Caco-2 (cell line): ENCODE measurements at regions of chr22 and their contacts with region 1.

Region 1: GRCh38 chr22:47452184-47452583 is 689.7 kb downstream of the TBC1D22A start:
- DNase-seq: peak in 1 of 2 experiments; percentile 34
- H3K4me3 ChIP-seq: no peak overlapping the region
- H3K4me3 Mint-ChIP-seq: no peak overlapping the region
- H3K27ac Mint-ChIP-seq: no peak overlapping the region
- H3K4me1 ChIP-seq: no peaks in the 10 kb centered on the region
- H3K4me1 Mint-ChIP-seq: no peaks in the 10 kb centered on the region
- H3K27me3 ChIP-seq: no peaks in the 10 kb centered on the region
- H3K27me3 Mint-ChIP-seq: peaks cover 17% of the 10 kb centered on the region
- CTCF ChIP-seq: peak; percentile 38 to 50

Region 2: GRCh38 chr22:47837703-47838102 is 385.5 kb after region 1 on chr22:
- CTCF ChIA-PET with region 1: no interaction called
- POLR2A ChIA-PET with region 1: no interaction called
- intact Hi-C with region 1: loop called (anchors 5 kb)
- DNase-seq: peak in 1 of 2 experiments; percentile 38
- H3K4me3 ChIP-seq: no peak overlapping the region
- H3K4me3 Mint-ChIP-seq: no peak overlapping the region
- H3K27ac Mint-ChIP-seq: no peak overlapping the region
- H3K4me1 ChIP-seq: no peaks in the 10 kb centered on the region
- H3K4me1 Mint-ChIP-seq: no peaks in the 10 kb centered on the region
- H3K27me3 ChIP-seq: no peaks in the 10 kb centered on the region
- H3K27me3 Mint-ChIP-seq: no peaks in the 10 kb centered on the region
- CTCF ChIP-seq: peak; percentile 39 to 51